PC-3 (cell line): ENCODE measurements at regions of chr12 and their contacts with region 1.

Region 1: DNA sequence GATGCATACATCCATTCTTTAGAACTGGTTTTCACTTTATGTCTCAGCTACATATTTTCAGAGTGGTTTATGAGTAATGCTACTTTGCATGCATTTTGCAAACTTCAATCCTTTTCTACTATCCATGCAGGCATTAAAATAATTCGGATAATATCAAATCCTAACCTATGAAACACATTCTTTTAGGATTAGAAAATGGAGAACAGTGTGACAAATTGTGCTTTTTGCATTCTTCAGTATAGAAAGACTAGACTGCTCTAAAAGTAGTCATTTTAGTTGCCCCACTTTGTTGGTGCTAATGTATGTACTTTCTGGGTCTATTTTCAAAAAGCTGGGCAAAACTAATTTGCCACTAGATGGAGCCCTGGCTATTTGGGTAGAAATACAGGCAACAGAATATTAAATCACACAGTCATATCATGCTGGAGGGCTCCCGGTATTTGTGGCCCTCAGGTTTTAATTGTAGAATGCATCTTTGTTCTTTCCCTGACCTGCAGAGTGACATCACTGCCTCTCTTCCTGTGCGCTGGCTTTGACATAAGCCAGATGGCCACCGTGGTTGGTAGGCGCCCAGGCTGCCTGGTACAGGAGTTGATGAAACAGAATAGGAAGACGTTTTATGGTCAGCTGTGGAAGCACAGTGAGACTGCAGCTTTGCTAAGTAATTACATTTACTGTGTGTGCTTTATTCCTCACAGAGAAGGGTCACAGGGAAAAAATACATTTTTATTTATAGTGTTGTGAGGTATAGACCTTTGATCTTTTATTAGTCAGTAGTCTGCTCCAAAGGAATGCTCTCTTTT is 28.1 kb downstream of the MSRB3 start:
- DNase-seq: peak; percentile 83
- ATAC-seq: peak; percentile 71
- H3K4me3 ChIP-seq: peak overlapping the region; percentile 51
- H3K27ac ChIP-seq: peak overlapping the region; percentile 70
- H3K4me1 ChIP-seq: peaks cover 29% of the 10 kb centered on the region
- H3K27me3 ChIP-seq: no peaks in the 10 kb centered on the region
- CTCF ChIP-seq: peak; percentile 90

Region 2: DNA sequence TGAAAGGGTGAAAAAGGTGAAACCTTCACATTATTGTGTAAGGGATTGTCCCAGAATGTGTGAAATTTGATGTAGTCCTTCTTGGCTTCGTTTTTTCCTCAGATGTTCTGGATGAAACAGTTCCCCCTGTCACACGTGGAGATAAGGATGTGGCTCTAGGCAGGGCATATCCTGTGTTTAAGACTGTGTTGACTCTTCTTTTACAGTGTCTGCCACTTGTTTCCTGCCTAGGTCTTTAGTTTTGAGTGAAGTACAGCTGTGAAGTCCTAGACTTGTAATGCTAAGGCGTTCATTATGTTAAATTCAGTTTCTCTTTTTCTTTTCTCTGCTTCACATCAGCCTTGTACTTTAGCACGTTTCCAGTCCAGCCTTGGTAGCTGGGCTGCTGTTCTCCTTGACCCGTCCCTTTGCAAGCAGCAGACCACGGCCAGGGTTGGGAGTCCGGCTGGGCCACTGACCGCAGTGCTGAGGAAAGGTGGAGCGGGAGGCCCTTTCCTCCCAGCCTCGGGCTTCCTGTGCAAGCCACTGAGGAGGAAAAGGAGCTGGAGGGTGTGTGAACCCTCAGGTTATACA is 637.2 kb before region 1 on chr12:
- CTCF ChIA-PET with region 1: no interaction called
- POLR2A ChIA-PET with region 1: interaction called, 10 read pairs
- intact Hi-C with region 1: no loop called
- DNase-seq: peak; percentile 41
- ATAC-seq: peak; percentile 78
- H3K4me3 ChIP-seq: peak overlapping the region; percentile 21
- H3K27ac ChIP-seq: peak overlapping the region; percentile 18
- H3K4me1 ChIP-seq: peaks cover 55% of the 10 kb centered on the region
- H3K27me3 ChIP-seq: no peaks in the 10 kb centered on the region
- CTCF ChIP-seq: no peak

Region 3: GRCh38 chr12:65695113-65695865 is 388.7 kb after region 1 on chr12:
- CTCF ChIA-PET with region 1: no interaction called
- POLR2A ChIA-PET with region 1: no interaction called
- intact Hi-C with region 1: loop called (anchors 5 kb)
- DNase-seq: peak; percentile 99
- ATAC-seq: peak; percentile 90
- H3K4me3 ChIP-seq: no peak overlapping the region
- H3K27ac ChIP-seq: peak overlapping the region; percentile 85
- H3K4me1 ChIP-seq: peaks cover 45% of the 10 kb centered on the region
- H3K27me3 ChIP-seq: no peaks in the 10 kb centered on the region
- CTCF ChIP-seq: no peak

Region 4: GRCh38 chr12:65878544-65878943 is 572.0 kb after region 1 on chr12:
- CTCF ChIA-PET with region 1: no interaction called
- POLR2A ChIA-PET with region 1: interaction called, 3 read pairs
- intact Hi-C with region 1: loop called (anchors 5 kb)
- DNase-seq: peak; percentile 59
- ATAC-seq: peak; percentile 6; the same call in 1 of the 2 replicates
- H3K4me3 ChIP-seq: no peak overlapping the region
- H3K27ac ChIP-seq: peak overlapping the region; percentile 31
- H3K4me1 ChIP-seq: peaks cover 61% of the 10 kb centered on the region
- H3K27me3 ChIP-seq: no peaks in the 10 kb centered on the region
- CTCF ChIP-seq: peak; percentile 43; the same call in 1 of the 2 replicates

Region 5: DNA sequence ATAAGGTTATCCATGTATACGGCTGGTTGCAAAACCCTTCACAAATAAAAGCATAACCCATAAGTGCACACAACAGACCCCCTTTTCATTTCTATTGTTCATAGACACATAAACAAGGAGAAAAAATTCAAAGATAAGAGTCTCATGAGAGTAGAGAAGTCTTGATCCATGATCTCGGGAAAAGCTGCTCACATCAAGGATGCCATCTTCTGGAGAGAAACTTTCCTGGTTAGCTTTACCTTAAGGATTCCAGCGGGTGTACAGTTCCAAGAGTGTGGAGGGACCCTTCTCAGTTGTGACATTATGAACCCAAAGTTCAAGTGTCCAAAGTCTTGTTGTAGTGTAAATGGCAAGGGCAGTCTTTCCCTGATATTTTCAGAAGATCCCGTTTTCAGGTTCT is 679.5 kb after region 1 on chr12:
- CTCF ChIA-PET with region 1: no interaction called
- POLR2A ChIA-PET with region 1: no interaction called
- intact Hi-C with region 1: loop called (anchors 2 kb)
- DNase-seq: no peak
- ATAC-seq: no peak
- H3K4me3 ChIP-seq: no peak overlapping the region
- H3K27ac ChIP-seq: no peak overlapping the region
- H3K4me1 ChIP-seq: no peaks in the 10 kb centered on the region
- H3K27me3 ChIP-seq: no peaks in the 10 kb centered on the region
- CTCF ChIP-seq: no peak

Region 6: GRCh38 chr12:66087365-66087943 is 780.9 kb after region 1 on chr12:
- CTCF ChIA-PET with region 1: no interaction called
- POLR2A ChIA-PET with region 1: no interaction called
- intact Hi-C with region 1: loop called (anchors 1 kb)
- DNase-seq: peak; percentile 84
- ATAC-seq: peak; percentile 75
- H3K4me3 ChIP-seq: no peak overlapping the region
- H3K27ac ChIP-seq: no peak overlapping the region
- H3K4me1 ChIP-seq: peaks cover 10% of the 10 kb centered on the region
- H3K27me3 ChIP-seq: no peaks in the 10 kb centered on the region
- CTCF ChIP-seq: peak; percentile 89

Region 7: DNA sequence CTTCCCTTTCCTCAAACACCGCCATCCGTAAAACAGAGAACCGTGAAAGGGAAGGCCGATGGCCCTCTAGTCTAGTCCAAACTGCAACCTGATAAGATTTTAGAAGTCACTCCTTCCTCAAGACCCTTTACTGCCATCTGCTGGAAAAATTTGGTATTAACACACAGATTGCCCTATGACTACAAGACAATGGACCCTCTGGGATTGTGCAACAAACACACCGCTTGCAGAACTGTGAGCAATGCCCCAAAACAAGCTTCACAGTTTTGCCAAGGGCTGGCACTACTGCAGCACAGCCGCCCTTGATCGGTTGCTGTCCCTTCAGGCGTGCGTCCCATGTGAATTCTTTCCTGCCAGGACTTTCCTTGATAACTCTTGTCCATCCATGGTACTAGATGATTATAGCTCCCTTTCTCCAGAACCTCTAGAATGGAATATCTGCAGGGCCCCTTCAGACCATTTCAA is 800.9 kb after region 1 on chr12:
- CTCF ChIA-PET with region 1: no interaction called
- POLR2A ChIA-PET with region 1: no interaction called
- intact Hi-C with region 1: loop called (anchors 1 kb)
- DNase-seq: peak; percentile 100
- ATAC-seq: peak; percentile 99
- H3K4me3 ChIP-seq: peak overlapping the region; percentile 10; the same call in 1 of the 2 replicates
- H3K27ac ChIP-seq: no peak overlapping the region
- H3K4me1 ChIP-seq: peaks cover 4% of the 10 kb centered on the region; the same call in 1 of the 2 replicates
- H3K27me3 ChIP-seq: no peaks in the 10 kb centered on the region
- CTCF ChIP-seq: peak; percentile 83